ENCODE measurements at regions of chr9 and their contacts with region 1.

Region 1: GRCh38 chr9:95772320-95773052 is 103.0 kb upstream of the ERCC6L2 start:
- DNase-seq: peak; percentile 93
- H3K4me3 ChIP-seq: peak overlapping the region; percentile 11 to 25 (median 21)
- H3K27ac ChIP-seq: peak overlapping the region; percentile 70 to 85 (median 84)
- H3K4me1 ChIP-seq: peaks cover 0 to 39% (median 26%) of the 10 kb centered on the region in 4 donors
- H3K27me3 ChIP-seq: no peaks in the 10 kb centered on the region
- CTCF ChIP-seq: no peak
- EP300 ChIP-seq: peak in 3 of 4 donors; percentile 39 to 72 (median 52)
- POLR2A ChIP-seq: no peak

Region 2: DNA sequence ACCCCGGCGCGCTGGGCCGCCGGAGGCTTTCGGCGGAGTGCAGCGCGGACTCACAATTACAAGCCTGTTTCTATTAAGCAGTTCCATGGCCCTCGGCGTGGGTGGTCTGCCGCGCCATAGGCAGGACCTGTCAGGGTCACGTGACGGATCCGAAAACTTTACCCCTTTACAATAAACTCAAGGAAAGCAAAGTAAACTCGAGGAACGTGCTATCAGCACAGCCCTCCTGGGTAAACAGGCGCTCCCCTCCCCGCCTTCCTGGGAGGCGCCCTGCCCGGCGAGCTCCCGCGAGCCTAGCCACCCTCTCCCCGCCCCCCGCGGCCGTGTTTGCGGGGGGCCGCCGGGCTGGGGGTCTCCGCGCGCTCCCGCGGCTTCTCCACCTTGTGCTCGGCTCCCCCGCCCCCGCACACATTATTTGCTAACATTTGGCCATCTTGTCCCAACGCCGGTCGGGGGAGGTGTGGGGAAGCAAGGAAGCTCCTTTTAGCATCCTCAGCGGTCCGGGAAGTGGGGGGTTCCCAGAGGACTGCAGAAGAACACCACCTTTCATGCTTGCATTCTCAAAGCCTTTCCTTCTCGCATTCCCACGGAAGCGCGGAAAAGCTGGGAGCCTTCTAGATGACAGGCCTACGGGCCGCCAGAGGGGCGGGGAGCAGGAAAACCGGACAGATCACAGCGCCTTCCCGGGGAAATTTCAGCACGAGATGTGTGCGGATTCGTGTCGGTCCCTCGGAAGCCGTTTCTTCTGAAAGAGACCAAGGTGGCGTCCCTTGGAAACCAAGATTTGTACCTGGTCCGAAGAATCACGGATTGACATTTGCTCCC is 255.5 kb before region 1 on chr9 and contains the start of gene PTCH1:
- intact Hi-C with region 1: loop called (anchors 2 kb)
- DNase-seq: peak; percentile 79
- H3K4me3 ChIP-seq: peak within 1 kb of the TSS; percentile 37 to 60 (median 53)
- H3K27ac ChIP-seq: peak within 1 kb of the TSS; percentile 52 to 78 (median 68)
- H3K4me1 ChIP-seq: peaks cover 0 to 20% (median 12%) of the 10 kb centered on the region in 4 donors
- H3K27me3 ChIP-seq: peaks cover 0 to 6% (median 0%) of the 10 kb centered on the region in 3 donors
- CTCF ChIP-seq: no peak
- EP300 ChIP-seq: no peak
- POLR2A ChIP-seq: no peak
- total RNA-seq, gene PTCH1: 7.1 to 10.7 (median 8.7) TPM

Measured in sigmoid colon (tissue), 7 donors.